ENCODE measurements at regions of chr16 and their contacts with region 1.

Region 1: DNA sequence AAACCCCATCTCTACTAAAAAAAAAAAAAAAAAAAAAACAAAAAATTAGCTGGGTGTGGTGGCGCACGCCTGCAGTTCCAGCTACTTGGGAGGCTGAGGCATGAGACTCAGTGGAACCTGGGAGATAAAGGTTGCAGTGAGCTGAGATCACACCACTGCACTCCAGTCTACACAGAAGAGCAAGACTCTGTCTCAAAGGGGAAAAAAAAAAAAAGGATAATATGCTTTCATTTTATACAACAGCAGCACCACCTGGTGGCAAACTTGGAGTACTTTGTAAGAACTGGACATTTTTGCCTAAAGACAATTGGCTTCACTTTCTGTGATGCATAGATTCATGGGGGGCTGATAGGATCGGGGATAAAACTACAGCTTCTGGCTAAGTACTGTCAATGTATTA is 8.5 kb downstream of the CHTF8 start:
- DNase-seq: peak; percentile 81
- H3K4me3 Mint-ChIP-seq: no peak overlapping the region
- H3K27ac Mint-ChIP-seq: no peak overlapping the region
- H3K4me1 Mint-ChIP-seq: no peaks in the 10 kb centered on the region
- H3K27me3 Mint-ChIP-seq: no peaks in the 10 kb centered on the region
- CTCF ChIP-seq: peak; percentile 51

Region 2: DNA sequence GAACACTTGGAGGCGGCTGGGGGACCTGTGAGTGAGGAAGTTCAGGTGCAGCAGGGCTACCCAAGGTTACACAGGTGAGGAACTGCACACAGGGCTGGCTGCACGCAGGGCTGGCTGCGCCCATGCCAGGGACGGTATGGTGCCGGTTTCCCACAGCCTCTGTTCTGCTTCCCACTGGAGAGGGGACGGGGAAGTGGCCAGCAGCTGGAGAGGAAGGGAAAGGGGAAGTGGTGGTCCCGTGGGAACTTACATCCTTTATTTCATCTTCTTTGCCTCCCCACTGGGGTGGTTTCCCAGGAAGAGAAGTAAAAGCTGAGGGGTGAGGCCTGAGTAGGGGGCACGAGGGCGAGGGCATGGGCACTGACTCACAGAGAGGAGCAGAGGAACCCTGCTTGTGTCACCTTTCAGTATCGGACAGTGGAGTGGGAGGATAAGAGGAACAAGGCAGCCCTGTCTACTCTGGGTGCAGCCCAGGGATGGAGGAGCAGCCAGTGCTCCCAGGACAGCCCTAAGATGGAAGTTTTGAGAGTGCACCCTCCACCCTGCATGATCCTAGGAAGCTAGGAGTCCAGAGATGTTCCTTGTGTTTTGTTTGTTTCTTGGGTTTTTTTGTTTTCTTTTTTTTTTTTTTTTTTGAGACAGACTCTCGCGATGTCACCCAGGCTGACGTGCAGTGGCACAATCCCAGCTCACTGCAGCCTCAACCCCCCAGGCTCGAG is 412.3 kb before region 1 on chr16:
- CTCF ChIA-PET with region 1: no interaction called
- POLR2A ChIA-PET with region 1: no interaction called
- intact Hi-C with region 1: no loop called
- DNase-seq: no peak
- H3K4me3 Mint-ChIP-seq: no peak overlapping the region
- H3K27ac Mint-ChIP-seq: no peak overlapping the region
- H3K4me1 Mint-ChIP-seq: peaks cover 12% of the 10 kb centered on the region
- H3K27me3 Mint-ChIP-seq: no peaks in the 10 kb centered on the region
- CTCF ChIP-seq: no peak

Region 3: GRCh38 chr16:68843482-68844210 is 280.3 kb before region 1 on chr16 and contains the start of gene TANGO6:
- CTCF ChIA-PET with region 1: interaction called, 110 read pairs
- POLR2A ChIA-PET with region 1: interaction called, 10 read pairs
- intact Hi-C with region 1: loop called (anchors 5 kb)
- DNase-seq: peak; percentile 79
- H3K4me3 Mint-ChIP-seq: peak within 1 kb of the TSS; percentile 82
- H3K27ac Mint-ChIP-seq: peak within 1 kb of the TSS; percentile 82
- H3K4me1 Mint-ChIP-seq: peaks cover 10% of the 10 kb centered on the region
- H3K27me3 Mint-ChIP-seq: no peaks in the 10 kb centered on the region
- CTCF ChIP-seq: no peak
- total RNA-seq, gene TANGO6: 14.6 and 21.8 TPM in 2 replicates

Region 4: DNA sequence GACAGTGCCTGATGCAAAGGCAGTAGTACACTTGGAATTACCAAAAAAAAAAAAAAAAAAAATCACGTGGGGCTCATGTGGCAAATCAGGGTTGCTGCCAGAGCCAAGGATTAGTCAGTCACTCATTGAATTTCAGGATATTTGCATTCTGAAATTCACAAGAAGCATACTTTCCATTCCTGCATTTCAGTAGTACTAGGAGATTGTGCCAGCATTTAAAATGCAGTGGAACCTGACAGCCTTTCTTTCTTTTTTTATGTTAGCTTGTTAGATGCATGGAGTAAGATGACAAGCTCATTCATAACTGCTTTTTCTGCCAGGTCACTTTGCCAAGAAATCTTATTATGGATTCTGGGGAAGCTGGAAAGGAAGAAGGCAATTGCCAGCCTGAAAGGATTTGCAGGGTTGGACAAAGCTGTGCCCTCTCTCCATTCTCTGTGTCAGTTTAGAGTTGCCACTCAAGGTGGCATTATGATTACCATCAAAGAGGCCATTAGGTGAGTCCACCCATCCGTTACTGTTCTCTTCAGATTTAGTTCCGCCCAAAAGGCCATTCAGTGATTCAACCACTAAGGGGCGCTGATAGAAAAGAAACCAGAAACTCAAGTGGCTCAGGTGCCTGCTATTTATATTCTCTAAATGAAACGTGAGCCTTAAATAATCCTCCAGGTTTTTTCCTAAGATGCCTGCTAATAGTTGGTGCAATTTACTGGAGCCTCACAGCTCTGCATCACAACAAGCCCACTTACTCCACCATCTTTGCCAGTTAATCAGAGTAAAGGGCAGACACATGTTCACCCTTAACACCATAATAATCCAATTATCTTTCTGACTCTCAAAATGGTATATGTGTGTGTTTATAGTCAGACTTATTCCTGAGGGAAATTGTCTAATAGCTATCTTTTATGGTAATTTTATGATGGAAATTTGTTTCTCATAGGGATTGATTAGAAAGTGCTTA is 221.6 kb before region 1 on chr16:
- CTCF ChIA-PET with region 1: interaction called, 97 read pairs
- POLR2A ChIA-PET with region 1: interaction called, 3 read pairs
- intact Hi-C with region 1: loop called (anchors 1 kb)
- DNase-seq: peak; percentile 81
- H3K4me3 Mint-ChIP-seq: no peak overlapping the region
- H3K27ac Mint-ChIP-seq: no peak overlapping the region
- H3K4me1 Mint-ChIP-seq: no peaks in the 10 kb centered on the region
- H3K27me3 Mint-ChIP-seq: no peaks in the 10 kb centered on the region
- CTCF ChIP-seq: peak; percentile 76

Region 5: GRCh38 chr16:69105489-69106361 is 18.2 kb before region 1 on chr16 and contains the start of gene HAS3:
- CTCF ChIA-PET with region 1: interaction called, 63 read pairs
- POLR2A ChIA-PET with region 1: no interaction called
- intact Hi-C with region 1: no loop called
- DNase-seq: peak; percentile 81
- H3K4me3 Mint-ChIP-seq: peak within 1 kb of the TSS; percentile 96
- H3K27ac Mint-ChIP-seq: peak within 1 kb of the TSS; percentile 84
- H3K4me1 Mint-ChIP-seq: peaks cover 15% of the 10 kb centered on the region
- H3K27me3 Mint-ChIP-seq: no peaks in the 10 kb centered on the region
- CTCF ChIP-seq: peak; percentile 55
- total RNA-seq, gene HAS3: 0.72 and 2.8 TPM in 2 replicates

Region 6: DNA sequence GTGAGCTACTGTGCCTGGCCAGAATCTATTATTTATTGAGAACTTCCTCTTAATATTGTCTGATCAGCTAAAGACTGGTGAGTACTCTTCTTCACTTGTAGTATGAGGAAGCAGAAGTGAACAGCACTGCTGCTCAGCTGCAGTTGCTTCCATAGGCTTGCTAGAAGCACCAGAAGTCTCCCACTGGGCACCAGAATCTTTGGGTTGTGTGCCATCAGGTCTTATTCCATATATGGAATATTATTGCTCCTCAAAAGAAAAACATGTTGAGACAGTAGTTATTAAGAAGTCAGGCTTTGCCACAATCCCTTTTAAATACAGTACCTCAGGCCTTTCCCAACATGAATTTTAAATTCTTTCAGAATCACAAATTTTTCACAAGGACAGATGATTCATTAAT is 80.3 kb after region 1 on chr16:
- CTCF ChIA-PET with region 1: no interaction called
- POLR2A ChIA-PET with region 1: no interaction called
- intact Hi-C with region 1: no loop called
- DNase-seq: no peak
- H3K4me3 Mint-ChIP-seq: no peak overlapping the region
- H3K27ac Mint-ChIP-seq: peak overlapping the region; percentile 89
- H3K4me1 Mint-ChIP-seq: peaks cover 35% of the 10 kb centered on the region
- H3K27me3 Mint-ChIP-seq: no peaks in the 10 kb centered on the region
- CTCF ChIP-seq: no peak

Region 7: GRCh38 chr16:69217433-69217832 is 93.5 kb after region 1 on chr16:
- CTCF ChIA-PET with region 1: no interaction called
- POLR2A ChIA-PET with region 1: no interaction called
- intact Hi-C with region 1: no loop called
- DNase-seq: peak; percentile 30
- H3K4me3 Mint-ChIP-seq: peak overlapping the region; percentile 33
- H3K27ac Mint-ChIP-seq: peak overlapping the region; percentile 12
- H3K4me1 Mint-ChIP-seq: peaks cover 17% of the 10 kb centered on the region
- H3K27me3 Mint-ChIP-seq: no peaks in the 10 kb centered on the region
- CTCF ChIP-seq: no peak

Measured in MCF 10A (cell line).